ENCODE measurements at regions of chr11 and their contacts with region 1.

Region 1: GRCh38 chr11:22304337-22304961 is 33.7 kb upstream of the SLC17A6 start:
- DNase-seq: no peak
- H3K4me3 ChIP-seq: no peak overlapping the region
- H3K27ac ChIP-seq: no peak overlapping the region
- H3K27me3 ChIP-seq: no peaks in the 10 kb centered on the region
- CTCF ChIP-seq: peak; percentile 67

Region 2: DNA sequence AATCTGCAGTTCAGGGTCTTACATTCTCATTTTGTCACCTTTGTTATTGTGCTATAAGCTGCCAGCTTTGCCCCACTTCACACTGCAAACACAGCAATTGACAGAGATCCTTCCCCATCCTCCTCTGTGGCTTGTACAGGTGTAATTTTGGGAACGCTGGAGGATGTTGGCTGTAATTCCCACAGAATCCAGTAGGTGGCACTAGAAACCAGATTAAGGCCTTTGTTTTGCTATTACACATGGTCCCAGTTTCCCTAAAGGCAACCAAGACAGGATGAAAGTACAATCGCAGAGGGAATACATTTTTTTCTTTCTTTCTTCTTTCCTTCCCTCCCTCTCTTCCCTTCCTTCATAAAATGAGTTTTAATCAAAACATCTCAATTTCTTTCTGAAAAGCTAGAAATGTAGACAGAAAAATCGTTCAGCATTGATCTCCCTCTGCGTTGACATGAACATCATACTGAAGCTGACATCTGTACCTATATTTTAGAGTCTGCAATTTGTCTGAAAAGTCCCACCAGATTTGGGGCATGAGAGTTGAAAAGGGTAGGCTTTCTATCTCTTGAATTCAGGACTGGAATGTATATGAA is 1656.4 kb before region 1 on chr11:
- CTCF ChIA-PET with region 1: interaction called, 18 read pairs
- POLR2A ChIA-PET with region 1: no interaction called
- DNase-seq: peak; percentile 4
- H3K4me3 ChIP-seq: no peak overlapping the region
- H3K27ac ChIP-seq: no peak overlapping the region
- H3K27me3 ChIP-seq: no peaks in the 10 kb centered on the region
- CTCF ChIP-seq: peak; percentile 89

Region 3: DNA sequence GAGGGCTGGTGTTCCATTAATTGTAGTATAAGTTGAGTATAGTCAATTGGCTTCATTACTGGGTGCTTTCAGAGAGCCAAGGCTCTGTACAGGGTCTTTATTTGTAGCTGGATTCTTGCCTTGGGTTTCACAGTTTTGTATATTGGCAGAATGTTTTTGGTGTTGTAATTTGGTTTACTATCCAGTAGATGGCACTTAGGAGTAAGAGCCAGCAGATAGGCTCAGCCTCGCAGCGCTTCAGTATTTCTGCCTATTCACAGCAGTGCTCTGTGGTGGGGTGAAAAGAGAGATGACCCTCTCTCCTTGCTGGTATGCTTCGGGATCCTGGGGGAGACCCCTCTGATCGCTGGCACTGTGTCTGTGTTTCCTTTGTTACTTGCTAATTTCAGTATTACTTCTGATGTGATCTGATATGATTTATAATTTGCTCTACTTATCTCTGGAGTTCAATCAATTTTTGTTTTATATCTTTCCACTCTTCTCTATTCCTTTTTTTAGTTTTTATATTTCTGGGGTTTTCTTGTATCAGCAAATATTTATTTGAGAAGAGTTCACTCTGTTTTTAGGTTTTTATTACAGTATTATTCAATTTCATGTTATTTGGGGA is 59.4 kb before region 1 on chr11:
- CTCF ChIA-PET with region 1: interaction called, 18 read pairs
- POLR2A ChIA-PET with region 1: no interaction called
- DNase-seq: peak; percentile 1
- H3K4me3 ChIP-seq: no peak overlapping the region
- H3K27ac ChIP-seq: no peak overlapping the region
- H3K27me3 ChIP-seq: no peaks in the 10 kb centered on the region
- CTCF ChIP-seq: peak; percentile 67

Region 4: GRCh38 chr11:22256876-22257275 is 47.6 kb before region 1 on chr11:
- CTCF ChIA-PET with region 1: no interaction called
- POLR2A ChIA-PET with region 1: no interaction called
- DNase-seq: no peak
- H3K4me3 ChIP-seq: no peak overlapping the region
- H3K27ac ChIP-seq: no peak overlapping the region
- H3K27me3 ChIP-seq: no peaks in the 10 kb centered on the region
- CTCF ChIP-seq: no peak

Region 5: GRCh38 chr11:22703040-22703439 is 398.6 kb after region 1 on chr11:
- CTCF ChIA-PET with region 1: no interaction called
- POLR2A ChIA-PET with region 1: no interaction called
- DNase-seq: peak; percentile 46
- H3K4me3 ChIP-seq: no peak overlapping the region
- H3K27ac ChIP-seq: no peak overlapping the region
- H3K27me3 ChIP-seq: no peaks in the 10 kb centered on the region
- CTCF ChIP-seq: no peak

Region 6: DNA sequence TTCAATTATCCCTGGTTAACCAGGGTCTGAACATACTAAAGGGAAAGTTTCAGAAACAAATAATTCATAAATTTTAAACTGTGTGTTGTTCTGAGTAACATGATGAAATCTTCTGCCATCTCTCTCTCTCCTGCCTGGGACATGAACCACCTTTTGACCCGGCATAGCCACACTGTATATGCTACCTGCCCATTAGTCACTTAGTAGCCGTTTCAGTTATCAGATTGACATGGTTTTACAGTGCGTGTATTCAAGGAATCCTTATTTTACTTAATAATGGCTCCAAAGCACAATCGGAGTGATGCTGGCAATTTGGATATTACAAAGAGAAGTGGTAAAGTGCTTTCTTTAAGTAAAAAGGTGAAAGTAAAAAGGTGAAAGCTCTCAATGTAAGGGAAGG is 783.0 kb after region 1 on chr11:
- CTCF ChIA-PET with region 1: no interaction called
- POLR2A ChIA-PET with region 1: no interaction called
- DNase-seq: no peak
- H3K4me3 ChIP-seq: no peak overlapping the region
- H3K27ac ChIP-seq: no peak overlapping the region
- H3K27me3 ChIP-seq: no peaks in the 10 kb centered on the region
- CTCF ChIP-seq: no peak

Measured in AG04450 (cell line).